IMR-90 (cell line): ENCODE measurements at regions of chr18 and their contacts with region 1.

Region 1: GRCh38 chr18:9561759-9562158 is 52.6 kb downstream of the PPP4R1 start:
- DNase-seq: no peak
- ATAC-seq: no peak
- H3K4me3 ChIP-seq: no peak overlapping the region
- H3K27ac ChIP-seq: no peak overlapping the region
- H3K4me1 ChIP-seq: peaks cover 2% of the 10 kb centered on the region
- H3K27me3 ChIP-seq: no peaks in the 10 kb centered on the region
- CTCF ChIP-seq: no peak
- POLR2A ChIP-seq: no peak
- RAD21 ChIP-seq: no peak

Region 2: GRCh38 chr18:9546468-9546867 is 15.3 kb before region 1 on chr18:
- CTCF ChIA-PET with region 1: no interaction called
- POLR2A ChIA-PET with region 1: interaction called, 16 read pairs
- dilution Hi-C with region 1: no loop called
- in situ Hi-C with region 1: no loop called
- intact Hi-C with region 1: no loop called
- DNase-seq: no peak
- ATAC-seq: no peak
- H3K4me3 ChIP-seq: no peak overlapping the region
- H3K27ac ChIP-seq: no peak overlapping the region
- H3K4me1 ChIP-seq: no peaks in the 10 kb centered on the region; the same call in 1 of the 2 replicates
- H3K27me3 ChIP-seq: no peaks in the 10 kb centered on the region
- CTCF ChIP-seq: no peak
- POLR2A ChIP-seq: no peak
- RAD21 ChIP-seq: no peak

Region 3: GRCh38 chr18:9581667-9582066 is 19.9 kb after region 1 on chr18:
- CTCF ChIA-PET with region 1: no interaction called
- POLR2A ChIA-PET with region 1: no interaction called
- dilution Hi-C with region 1: no loop called
- in situ Hi-C with region 1: no loop called
- intact Hi-C with region 1: no loop called
- DNase-seq: no peak
- ATAC-seq: no peak
- H3K4me3 ChIP-seq: no peak overlapping the region
- H3K27ac ChIP-seq: no peak overlapping the region
- H3K4me1 ChIP-seq: peaks cover 2% of the 10 kb centered on the region; the same call in 1 of the 2 replicates
- H3K27me3 ChIP-seq: no peaks in the 10 kb centered on the region
- CTCF ChIP-seq: no peak
- POLR2A ChIP-seq: no peak
- RAD21 ChIP-seq: no peak